Posterior cingulate gyrus (tissue), 11 donors: ENCODE measurements at regions of chr3 and their contacts with region 1.

Region 1: DNA sequence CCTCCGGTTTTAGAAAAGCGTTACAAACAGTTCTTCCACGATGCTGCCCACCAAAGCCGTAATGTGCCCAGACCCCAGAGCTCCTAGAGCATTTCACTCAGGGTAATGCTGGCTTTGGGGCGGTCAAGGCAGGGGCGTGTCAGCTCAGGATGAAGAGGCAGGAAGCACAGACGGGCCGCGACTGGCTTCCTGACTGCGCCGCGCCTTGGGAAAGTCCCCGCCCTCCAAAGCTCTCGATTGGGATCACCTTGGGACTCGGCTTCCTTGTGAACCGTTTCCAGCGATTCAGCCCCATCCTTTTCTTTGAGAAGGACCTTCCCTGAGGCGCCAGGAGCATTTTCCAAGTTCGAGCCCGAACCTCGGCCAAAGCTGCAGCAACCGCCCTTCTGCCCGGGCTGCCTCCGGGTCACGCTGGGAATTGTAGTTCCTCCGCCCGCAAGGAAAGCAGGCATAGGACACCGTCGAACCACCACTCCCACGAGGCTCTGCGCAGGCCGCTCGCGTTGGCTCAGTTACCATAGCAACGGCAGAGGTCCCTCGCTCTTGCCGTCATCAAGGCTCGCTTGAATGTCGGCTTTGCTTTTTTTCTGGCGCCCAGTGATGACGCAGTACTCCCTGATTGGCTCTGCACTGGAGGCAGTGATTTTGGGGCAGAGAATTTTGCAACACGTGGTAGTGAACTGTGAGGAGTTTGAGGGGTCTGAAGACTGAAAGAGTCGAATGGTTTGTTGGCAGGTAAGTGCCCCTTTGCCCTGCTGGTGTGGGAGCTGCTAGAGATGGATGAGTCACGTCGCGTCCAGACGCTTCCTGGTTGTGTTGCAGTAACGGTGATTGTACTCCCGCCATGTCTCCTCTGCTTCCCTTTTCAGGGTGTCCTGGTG is at the starts of genes CCDC191 and QTRT2:
- DNase-seq: peak; percentile 98 to 100 (median 100)

Region 2: GRCh38 chr3:113947372-113948014 is 108.9 kb before region 1 on chr3 and contains the start of gene ZDHHC23:
- intact Hi-C with region 1: loop called (anchors 10 kb)
- DNase-seq: peak in 8 of 10 donors; percentile 28 to 91 (median 43)

Region 3: DNA sequence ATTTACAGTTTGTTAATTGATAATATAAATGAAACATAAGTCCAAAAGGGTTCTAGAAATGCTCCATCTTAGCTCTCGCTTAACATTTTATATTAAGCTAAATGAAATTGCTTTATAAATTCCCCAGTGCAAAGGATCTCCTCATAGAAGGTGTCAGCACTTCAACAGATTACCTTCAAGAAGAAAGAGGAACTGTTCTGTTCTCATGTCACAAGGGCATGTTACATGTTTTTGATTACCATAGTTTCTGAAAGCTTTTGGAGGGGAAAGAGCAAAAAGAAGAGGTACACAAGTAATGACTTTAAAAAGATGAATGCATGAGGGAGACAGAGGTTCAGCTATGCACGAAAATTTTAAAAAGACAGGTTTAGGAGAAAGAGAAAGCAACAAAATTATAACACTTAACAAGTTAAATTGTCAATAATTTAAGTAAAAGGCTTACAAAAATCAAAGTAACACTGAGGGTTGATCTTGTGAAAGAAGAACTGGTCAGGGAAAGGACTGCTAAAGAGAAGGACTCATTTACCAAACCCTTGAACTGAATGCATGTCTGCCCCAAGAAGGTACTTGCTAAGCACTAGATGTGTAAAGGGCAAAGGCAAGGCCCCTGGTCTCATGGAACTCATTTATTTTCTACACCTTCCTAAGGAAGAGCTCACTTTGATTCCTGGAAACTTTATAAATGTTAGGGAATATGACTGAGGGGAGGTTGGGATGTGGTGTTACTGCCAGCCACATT is 45.1 kb before region 1 on chr3:
- intact Hi-C with region 1: no loop called
- DNase-seq: no peak

Region 4: DNA sequence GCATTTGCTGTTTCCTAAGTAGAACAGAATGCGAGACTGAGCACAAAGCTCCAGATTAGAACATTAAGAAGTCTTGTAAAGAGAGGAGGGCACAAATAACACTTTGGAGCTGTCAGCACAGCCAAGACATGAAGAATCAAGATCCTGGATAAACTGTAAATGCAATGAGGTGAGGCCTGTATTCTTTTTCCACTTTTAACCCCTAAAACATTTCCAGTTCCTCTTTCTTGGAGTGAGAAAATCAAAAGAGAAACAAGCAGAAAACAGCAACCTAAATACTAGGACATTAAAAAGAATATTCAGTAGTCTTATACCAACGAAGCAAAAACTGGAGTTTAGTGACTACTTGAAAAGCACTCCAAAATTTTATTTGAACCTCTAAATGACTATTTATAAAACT is 886.4 kb after region 1 on chr3:
- intact Hi-C with region 1: no loop called
- DNase-seq: no peak